Activated CD4-positive, alpha-beta T cell treated with anti-CD3 and anti-CD28 coated beads, Interleukin-2, amount 10 ng/mL, durations not matched to agents 24 days and 14 days (primary cell): ENCODE measurements at regions of chr20 and their contacts with region 1.

Region 1: DNA sequence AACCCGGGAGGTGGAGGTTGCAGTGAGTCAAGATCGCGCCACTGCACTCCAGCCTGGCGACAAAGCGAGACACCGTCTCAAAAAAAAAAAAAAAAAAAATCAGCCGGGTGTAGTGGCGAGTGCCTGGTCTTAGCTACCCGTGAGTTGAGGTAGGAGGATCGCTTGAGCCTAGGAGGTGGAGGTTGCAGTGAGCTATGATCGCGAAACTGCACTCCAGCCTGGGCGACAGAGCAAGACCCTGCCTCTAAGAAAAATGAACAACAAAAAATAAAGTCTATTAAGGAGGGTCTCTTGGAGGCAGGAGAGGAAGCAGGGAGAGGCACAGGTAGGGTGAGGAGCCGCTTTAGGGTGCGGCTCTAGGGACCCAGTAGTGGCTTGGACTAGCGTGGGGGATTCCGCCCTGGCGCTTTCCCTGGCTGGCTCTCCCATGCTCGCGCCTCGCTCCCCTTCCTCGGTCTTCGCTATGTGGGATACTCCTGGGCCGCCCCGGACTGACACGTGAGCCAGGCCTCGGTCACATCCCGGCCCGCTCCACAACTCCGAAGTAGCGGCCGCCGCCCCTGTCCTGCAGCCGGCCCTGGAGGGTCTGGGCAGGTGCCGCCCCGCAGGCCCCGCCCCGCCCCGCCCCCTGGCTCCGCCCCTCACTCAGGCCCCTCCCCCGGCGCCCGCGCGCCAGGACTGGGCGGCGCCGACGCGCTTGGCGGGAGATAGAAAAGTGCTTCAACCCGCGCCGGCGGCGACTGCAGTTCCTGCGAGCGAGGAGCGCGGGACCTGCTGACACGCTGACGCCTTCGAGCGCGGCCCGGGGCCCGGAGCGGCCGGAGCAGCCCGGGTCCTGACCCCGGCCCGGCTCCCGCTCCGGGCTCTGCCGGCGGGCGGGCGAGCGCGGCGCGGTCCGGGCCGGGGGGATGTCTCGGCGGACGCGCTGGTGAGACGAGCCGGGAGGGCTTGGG is at the start of gene MYBL2:
- DNase-seq: peak; percentile 93
- H3K4me3 Mint-ChIP-seq: peak within 1 kb of the TSS; percentile 84
- H3K27ac Mint-ChIP-seq: peak within 1 kb of the TSS; percentile 90
- H3K4me1 Mint-ChIP-seq: peaks cover 12% of the 10 kb centered on the region
- H3K27me3 Mint-ChIP-seq: peaks cover 5% of the 10 kb centered on the region
- total RNA-seq, gene MYBL2: 108 and 110 TPM in 2 replicates

Region 2: DNA sequence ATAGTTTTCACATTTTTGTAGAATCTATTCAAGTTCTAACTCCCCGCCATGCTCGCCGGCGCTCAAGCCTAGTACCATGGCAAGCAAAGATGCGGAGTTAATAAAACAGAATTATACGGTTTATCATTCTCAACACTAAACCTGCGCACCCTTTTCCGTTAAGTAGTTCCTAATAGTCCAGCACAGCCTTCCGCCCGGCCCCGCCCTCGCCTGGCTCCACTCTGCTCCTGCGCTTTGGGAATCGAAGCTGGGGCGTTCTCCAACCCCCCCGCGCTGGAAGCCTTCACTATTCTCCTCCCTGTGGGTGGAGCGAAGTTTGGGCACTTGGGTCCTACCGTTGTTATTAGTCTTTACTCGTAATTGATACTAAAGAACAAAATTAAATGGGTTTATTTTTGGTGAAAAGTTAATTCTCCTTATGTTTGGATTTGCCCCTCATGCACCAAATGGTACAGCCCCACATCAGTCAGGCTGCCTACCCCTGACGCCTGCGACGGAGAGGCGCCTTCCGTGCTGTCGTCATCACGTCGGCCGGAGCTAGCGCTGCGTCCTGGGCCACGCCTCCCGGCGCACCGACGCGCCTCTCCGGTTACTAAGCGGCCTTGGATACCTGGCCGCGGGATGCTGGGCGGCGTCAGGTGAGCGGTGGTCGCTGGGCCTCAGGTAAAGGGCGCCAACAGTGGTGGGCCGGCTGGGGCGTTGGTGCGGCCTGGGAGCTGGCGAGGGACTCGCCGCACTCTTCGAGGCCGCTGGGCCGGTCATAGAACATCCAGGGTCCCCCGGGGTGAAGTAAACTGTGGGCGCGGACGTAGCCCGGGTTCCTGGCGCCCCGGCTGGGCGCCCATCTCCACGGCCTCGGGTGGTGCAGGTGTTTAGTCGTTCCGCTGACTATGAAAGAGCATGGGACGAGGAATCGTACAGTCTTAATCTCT is 76.0 kb before region 1 on chr20 and contains the start of gene IFT52:
- intact Hi-C with region 1: loop called (anchors 2 kb)
- DNase-seq: peak; percentile 97
- H3K4me3 Mint-ChIP-seq: peak within 1 kb of the TSS; percentile 94
- H3K27ac Mint-ChIP-seq: peak within 1 kb of the TSS; percentile 90
- H3K4me1 Mint-ChIP-seq: peaks cover 14% of the 10 kb centered on the region
- H3K27me3 Mint-ChIP-seq: peaks cover 4% of the 10 kb centered on the region
- total RNA-seq, gene IFT52: 18.6 and 20.7 TPM in 2 replicates

Region 3: GRCh38 chr20:44407402-44408184 is 740.9 kb after region 1 on chr20:
- intact Hi-C with region 1: no loop called
- DNase-seq: no peak
- H3K4me3 Mint-ChIP-seq: no peak overlapping the region
- H3K27ac Mint-ChIP-seq: no peak overlapping the region
- H3K4me1 Mint-ChIP-seq: no peaks in the 10 kb centered on the region
- H3K27me3 Mint-ChIP-seq: peaks cover 5% of the 10 kb centered on the region